GM13976 (cell line): ENCODE measurements at regions of chr16 and their contacts with region 1.

Region 1: DNA sequence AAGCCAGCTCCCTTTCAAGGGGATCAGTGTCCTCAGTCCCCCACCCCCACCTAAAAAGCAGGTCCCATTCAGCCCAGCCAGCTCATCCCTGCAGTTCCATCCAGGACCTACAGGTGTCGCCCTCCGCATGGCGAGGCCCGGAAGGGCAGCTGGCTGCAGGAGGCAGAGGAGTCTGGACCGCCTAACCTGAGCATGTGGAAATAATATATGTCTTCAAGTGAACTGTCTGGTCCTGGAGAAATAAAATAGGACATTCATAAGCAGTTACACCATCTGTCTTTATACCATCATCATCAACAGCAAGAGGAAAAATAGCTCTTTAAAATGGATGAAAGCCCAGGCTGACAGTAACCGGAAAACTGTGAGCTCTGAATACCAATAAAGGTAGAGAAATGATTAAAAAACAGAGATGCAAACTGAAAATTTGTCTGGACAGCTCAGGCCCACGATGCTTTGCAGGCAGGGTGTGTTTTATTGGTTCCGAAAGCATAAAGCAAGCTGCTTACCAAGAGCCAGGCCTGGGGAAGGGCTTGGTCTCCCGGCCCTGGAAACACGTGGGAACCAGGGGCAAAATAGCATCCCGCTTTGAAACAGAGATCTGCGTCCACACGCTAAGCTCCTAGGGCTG is 215.2 kb downstream of the ZFHX3 start:
- DNase-seq: peak; percentile 75
- CTCF ChIP-seq: peak; percentile 99

Region 2: DNA sequence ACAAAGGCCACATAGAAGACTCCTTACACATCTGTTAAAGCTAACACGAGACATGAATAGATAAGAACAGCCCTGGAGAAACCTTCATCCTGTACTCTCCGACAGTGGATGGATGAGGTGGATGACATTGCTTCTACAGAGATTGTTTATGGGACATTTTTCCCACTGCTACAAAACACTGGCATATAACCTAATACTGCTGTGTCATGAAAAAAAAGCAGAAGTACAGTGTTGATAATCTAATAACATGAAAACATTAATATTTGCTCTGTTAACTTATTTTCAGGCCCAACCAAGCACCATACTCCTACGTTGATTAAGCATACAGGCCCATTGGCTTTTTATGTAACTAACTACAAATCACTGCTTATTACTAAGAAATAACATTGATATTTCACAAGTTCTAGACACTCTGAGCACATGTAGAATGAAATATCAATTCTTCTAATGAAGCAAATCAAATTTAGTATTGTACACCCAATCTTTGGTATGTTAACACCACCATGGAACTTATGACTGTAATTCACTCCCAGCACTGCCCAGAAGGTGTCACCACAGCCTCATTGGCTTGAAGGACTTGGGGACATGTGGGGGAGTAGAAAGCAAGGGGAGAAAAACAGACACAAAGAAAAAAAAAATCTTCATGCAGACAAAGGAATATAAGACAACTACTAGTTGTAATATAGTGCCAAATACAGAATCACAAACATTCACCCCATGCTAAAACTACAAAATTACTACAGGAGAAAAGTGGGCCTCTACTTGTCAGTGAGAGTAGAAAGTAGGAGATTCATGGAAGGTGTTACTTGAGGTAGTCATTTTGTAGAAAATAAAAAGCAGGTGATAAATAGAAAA is 330.8 kb before region 1 on chr16:
- in situ Hi-C with region 1: loop called (anchors 25 kb)
- DNase-seq: peak; percentile 64
- CTCF ChIP-seq: peak; percentile 86

Region 3: DNA sequence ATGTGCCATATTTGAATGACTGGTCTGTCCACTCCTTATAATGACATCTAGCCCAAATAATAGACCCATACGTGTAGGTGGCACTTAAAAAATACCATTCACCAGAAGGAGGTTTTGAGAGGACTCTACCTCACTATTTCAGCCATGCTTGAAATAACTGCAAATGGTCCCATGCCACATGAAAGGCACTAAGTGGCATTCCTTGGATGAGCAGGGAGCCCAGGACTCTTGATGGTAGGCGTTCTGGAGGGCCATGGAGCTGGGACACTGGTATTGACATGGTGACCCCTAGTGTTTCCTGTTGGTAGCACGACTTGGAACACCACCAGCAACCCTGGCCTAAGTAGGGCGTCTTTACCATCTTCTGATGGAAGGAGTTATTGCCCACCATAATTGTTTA is 363.9 kb after region 1 on chr16:
- in situ Hi-C with region 1: loop called (anchors 25 kb)
- DNase-seq: peak; percentile 57
- CTCF ChIP-seq: peak; percentile 67

Region 4: GRCh38 chr16:73329363-73330292 is 496.9 kb after region 1 on chr16:
- in situ Hi-C with region 1: no loop called
- DNase-seq: no peak
- CTCF ChIP-seq: no peak